PC-9 (cell line): ENCODE measurements at regions of chr9 and their contacts with region 1.

Region 1: DNA sequence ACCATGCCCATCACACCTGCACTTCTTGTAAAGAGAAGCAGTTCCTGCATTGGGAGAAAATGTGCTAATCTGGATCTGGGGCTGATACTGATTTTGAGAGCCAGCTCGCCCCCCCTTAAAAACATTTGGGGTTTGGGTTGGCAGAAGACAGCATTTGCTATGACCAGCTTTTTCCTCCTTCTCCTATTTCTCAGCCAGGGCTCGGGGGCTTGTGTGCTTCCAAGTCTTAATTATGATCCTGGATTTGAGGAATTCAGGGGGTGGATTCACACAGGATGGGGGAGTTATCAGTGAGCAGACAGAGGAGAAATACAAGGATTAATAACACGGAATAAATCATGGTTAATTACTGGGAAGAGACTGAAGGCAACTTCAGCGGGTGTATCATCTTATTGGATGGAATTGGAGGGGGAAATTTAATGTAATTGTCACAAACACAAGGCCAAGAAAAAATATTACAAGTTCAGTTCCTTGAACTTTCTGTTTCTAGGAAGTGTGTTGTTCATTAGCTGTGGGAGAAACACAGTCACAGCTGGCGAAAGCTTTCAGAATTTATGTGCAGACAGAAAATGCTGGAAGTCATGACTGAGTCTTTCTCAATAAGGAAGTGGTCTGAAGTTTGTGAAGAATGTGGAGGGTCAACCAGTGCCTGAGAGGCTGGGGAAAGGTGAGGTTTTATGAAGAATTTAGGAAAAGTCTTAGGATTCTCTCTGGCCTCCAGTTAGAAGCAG is 15.3 kb downstream of the C9orf152 start:
- DNase-seq: peak in 1 of 2 experiments; percentile 86
- H3K4me3 ChIP-seq: no peak overlapping the region
- H3K27ac ChIP-seq: peak overlapping the region; percentile 37
- H3K4me1 ChIP-seq: peaks cover 29% of the 10 kb centered on the region
- H3K27me3 ChIP-seq: no peaks in the 10 kb centered on the region
- CTCF ChIP-seq: no peak

Region 2: GRCh38 chr9:110133608-110134210 is 59.0 kb before region 1 on chr9:
- CTCF ChIA-PET with region 1: interaction called, 11 read pairs
- POLR2A ChIA-PET with region 1: no interaction called
- intact Hi-C with region 1: no loop called
- DNase-seq: peak; percentile 49 to 90
- H3K4me3 ChIP-seq: no peak overlapping the region
- H3K27ac ChIP-seq: peak overlapping the region; percentile 93
- H3K4me1 ChIP-seq: peaks cover 71% of the 10 kb centered on the region
- H3K27me3 ChIP-seq: no peaks in the 10 kb centered on the region
- CTCF ChIP-seq: no peak

Region 3: DNA sequence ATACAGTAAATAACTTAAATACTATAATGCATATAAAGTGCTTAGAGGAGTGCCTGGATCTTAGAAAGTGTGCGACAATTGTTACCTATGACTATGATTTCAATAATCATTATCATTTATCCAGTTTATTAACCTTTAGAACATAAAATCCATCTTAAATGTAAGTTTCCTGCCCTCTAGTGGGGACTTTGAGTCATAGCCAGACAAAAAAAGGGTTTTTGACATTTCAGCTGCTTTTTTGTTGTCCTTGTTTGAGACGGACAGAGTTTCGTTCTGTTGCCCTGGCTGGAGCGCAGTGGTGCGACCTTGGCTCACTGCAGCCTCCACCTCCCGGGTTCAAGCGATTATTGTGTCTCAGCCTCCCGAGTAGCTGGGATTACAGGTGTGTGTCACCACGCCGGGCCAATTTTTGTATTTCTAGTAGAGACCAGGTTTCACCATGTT is 25.0 kb after region 1 on chr9:
- CTCF ChIA-PET with region 1: interaction called, 18 read pairs
- POLR2A ChIA-PET with region 1: no interaction called
- intact Hi-C with region 1: no loop called
- DNase-seq: peak in 1 of 2 experiments; percentile 10
- H3K4me3 ChIP-seq: peak overlapping the region; percentile 33; the same call in 1 of the 2 replicates
- H3K27ac ChIP-seq: no peak overlapping the region
- H3K4me1 ChIP-seq: no peaks in the 10 kb centered on the region
- H3K27me3 ChIP-seq: no peaks in the 10 kb centered on the region
- CTCF ChIP-seq: peak; percentile 89

Region 4: DNA sequence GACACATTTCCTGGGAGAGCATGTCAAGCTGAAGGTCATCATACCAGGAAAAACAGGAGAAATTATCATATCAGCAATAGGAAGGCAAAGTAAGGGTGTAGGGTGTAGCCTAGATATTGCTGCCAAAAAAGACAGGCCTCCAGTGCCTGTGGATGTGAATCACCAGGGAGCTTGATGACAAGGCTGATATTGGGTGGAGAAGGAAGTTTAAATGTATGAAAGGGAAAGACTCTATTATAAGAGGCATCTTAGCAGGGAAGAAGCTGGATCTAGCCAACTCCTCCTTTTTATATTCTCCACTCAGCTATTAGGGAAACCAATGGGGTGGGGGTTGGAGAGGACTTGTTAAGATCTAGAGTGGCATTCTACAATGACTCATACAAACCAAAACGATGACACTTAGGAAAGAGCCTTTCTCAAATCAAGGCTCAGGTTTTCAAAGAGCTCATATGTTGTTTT is 158.3 kb after region 1 on chr9:
- CTCF ChIA-PET with region 1: no interaction called
- POLR2A ChIA-PET with region 1: no interaction called
- intact Hi-C with region 1: loop called (anchors 10 kb)
- DNase-seq: peak; percentile 72 to 97
- H3K4me3 ChIP-seq: no peak overlapping the region
- H3K27ac ChIP-seq: peak overlapping the region; percentile 73
- H3K4me1 ChIP-seq: peaks cover 23% of the 10 kb centered on the region
- H3K27me3 ChIP-seq: no peaks in the 10 kb centered on the region
- CTCF ChIP-seq: no peak